ENCODE measurements at regions of chr12 and their contacts with region 1.

Region 1: DNA sequence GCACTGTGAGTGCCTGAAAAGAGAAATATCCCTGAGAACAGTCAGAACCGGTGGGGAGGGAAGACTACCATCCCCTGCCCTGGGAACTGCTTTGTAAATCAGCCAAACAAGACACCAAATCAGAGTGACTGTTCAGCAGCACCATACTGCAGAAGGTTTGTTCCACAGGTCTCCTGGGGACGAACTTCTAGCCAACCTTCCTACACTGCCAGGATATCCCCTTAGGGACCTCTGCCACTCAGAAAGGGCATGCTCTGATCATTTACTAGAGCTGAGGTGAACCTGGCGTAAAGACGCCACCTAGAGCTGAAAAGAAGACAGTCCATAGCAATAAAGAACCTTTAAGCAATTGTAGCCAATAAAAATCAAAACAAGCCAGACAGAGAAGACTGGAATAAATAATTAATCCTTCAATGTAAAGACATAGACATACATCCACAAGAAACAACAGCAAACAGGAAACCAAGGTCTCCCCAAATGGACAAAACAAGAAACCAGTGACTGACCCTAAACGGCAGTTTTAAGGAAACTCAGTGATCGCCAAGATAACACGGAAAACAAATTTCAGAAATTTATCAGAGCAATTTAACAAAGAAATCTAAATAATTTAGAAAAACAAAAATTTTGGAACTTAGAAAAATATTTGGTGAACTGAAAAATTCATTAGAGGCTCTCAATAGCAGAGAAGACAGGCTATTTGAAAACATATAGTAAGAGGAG is 228.1 kb upstream of the AMIGO2 start:
- DNase-seq: peak; percentile 33
- ATAC-seq: peak; percentile 88
- H3K4me3 Mint-ChIP-seq: peak overlapping the region; percentile 95
- H3K27ac Mint-ChIP-seq: peak overlapping the region; percentile 94
- H3K4me1 Mint-ChIP-seq: peaks cover 67% of the 10 kb centered on the region
- H3K27me3 Mint-ChIP-seq: no peaks in the 10 kb centered on the region
- CTCF ChIP-seq: peak; percentile 36

Region 2: DNA sequence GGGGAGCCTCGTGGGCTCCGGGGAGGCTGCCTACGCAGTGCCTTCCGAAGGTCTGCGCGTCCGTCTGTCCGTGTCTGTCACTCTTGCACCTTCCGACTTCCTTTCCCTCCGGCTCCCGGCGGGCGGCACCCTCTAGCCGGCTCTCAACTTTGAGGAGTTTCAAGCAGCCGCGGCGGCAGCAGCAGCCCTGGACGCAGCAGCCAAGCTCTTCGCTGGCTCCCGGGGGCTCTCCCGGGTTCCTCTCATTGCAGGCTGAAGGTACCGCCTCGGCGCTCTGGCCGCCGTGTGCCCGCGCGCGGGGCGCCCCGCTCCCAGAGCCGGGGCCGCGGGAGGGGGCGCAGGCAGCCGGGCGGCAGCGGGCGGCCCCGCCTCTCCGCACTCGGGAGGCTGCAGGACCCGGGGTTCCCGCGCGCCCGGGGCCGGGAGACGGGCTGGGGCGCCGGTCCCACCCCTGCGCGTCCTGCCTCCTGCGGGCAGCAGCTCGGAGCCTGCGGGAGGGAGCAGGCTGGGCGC is 228.3 kb before region 1 on chr12 and contains the starts of genes AMIGO2 and PCED1B:
- CTCF ChIA-PET with region 1: interaction called, 22 read pairs
- POLR2A ChIA-PET with region 1: interaction called, 40 read pairs
- intact Hi-C with region 1: loop called (anchors 1 kb)
- DNase-seq: no peak
- ATAC-seq: peak; percentile 47
- H3K4me3 Mint-ChIP-seq: peak within 1 kb of the TSS; percentile 99
- H3K27ac Mint-ChIP-seq: peak within 1 kb of the TSS; percentile 95
- H3K4me1 Mint-ChIP-seq: peaks cover 67% of the 10 kb centered on the region
- H3K27me3 Mint-ChIP-seq: no peaks in the 10 kb centered on the region
- CTCF ChIP-seq: no peak
- total RNA-seq, gene AMIGO2: 13.9 and 14.1 TPM in 2 replicates
- total RNA-seq, gene PCED1B: 60.9 and 65.4 TPM in 2 replicates

Region 3: GRCh38 chr12:47216150-47216677 is 91.6 kb before region 1 on chr12:
- CTCF ChIA-PET with region 1: interaction called, 5 read pairs
- POLR2A ChIA-PET with region 1: interaction called, 58 read pairs
- intact Hi-C with region 1: loop called (anchors 1 kb)
- DNase-seq: peak; percentile 42
- ATAC-seq: peak; percentile 80
- H3K4me3 Mint-ChIP-seq: peak overlapping the region; percentile 88
- H3K27ac Mint-ChIP-seq: peak overlapping the region; percentile 96
- H3K4me1 Mint-ChIP-seq: peaks cover 77% of the 10 kb centered on the region
- H3K27me3 Mint-ChIP-seq: no peaks in the 10 kb centered on the region
- CTCF ChIP-seq: no peak

Region 4: DNA sequence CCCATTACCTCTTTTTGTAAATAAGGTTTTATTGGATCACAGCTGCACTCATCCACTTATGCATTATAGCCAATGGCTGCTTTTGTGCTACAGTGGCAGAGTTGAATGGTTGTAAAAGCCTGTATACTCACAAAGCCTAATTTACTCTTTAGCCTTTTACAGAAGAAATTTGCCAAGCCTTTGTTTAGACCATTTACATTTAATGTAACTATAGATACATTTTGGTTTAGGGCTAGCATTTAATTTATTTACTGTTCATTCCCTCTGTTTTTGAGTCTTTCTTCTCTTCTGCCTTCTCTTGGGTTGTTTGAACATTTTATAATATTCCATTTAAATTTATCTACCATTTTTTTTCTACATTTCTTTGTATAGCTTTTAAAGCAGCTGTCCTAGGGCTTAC is 11.0 kb before region 1 on chr12:
- CTCF ChIA-PET with region 1: interaction called, 4 read pairs
- POLR2A ChIA-PET with region 1: interaction called, 11 read pairs
- intact Hi-C with region 1: no loop called
- DNase-seq: no peak
- ATAC-seq: no peak
- H3K4me3 Mint-ChIP-seq: no peak overlapping the region
- H3K27ac Mint-ChIP-seq: no peak overlapping the region
- H3K4me1 Mint-ChIP-seq: peaks cover 18% of the 10 kb centered on the region
- H3K27me3 Mint-ChIP-seq: no peaks in the 10 kb centered on the region
- CTCF ChIP-seq: no peak

Region 5: DNA sequence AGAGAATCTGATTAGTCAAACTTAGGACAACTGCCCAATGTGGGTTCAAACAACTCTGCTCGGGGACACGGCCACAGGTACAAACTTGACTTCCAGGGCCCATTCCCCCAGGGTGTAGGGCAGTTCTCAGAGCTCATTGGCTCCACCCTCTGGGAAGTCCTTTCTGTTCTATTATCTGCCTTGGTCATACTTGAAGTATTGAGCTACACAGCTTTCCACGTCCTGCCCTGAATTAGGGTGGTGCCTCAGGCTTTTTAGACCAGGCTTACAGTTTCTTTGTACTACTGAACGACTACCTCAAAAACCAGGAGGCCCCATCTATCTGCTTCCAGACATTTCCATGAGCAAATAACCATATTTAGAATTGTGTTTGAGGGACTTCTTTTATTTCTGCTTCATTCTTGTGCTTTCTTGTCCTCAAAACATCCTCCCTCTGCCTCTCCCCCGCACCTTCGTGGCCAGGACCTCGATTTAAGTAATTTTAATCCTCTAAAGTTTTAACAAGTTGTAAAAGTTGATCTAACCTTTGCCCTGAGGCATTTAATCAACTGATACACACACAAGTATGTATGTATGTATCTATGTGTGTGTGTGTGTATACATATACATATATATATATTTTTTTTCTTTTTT is 53.7 kb after region 1 on chr12:
- CTCF ChIA-PET with region 1: interaction called, 4 read pairs
- POLR2A ChIA-PET with region 1: interaction called, 33 read pairs
- intact Hi-C with region 1: loop called (anchors 1 kb)
- DNase-seq: no peak
- ATAC-seq: peak; percentile 68
- H3K4me3 Mint-ChIP-seq: peak overlapping the region; percentile 74
- H3K27ac Mint-ChIP-seq: peak overlapping the region; percentile 94
- H3K4me1 Mint-ChIP-seq: peaks cover 63% of the 10 kb centered on the region
- H3K27me3 Mint-ChIP-seq: no peaks in the 10 kb centered on the region
- CTCF ChIP-seq: no peak

Measured in activated B cell treated with CpG ODN at 0.5 μM for 24 hours (primary cell).